ENCODE measurements at regions of chr5 and their contacts with region 1.

Region 1: GRCh38 chr5:134603059-134603458 is 29.6 kb downstream of the SAR1B start:
- DNase-seq: no peak
- H3K4me3 Mint-ChIP-seq: no peak overlapping the region
- H3K27ac Mint-ChIP-seq: peak overlapping the region; percentile 45
- H3K4me1 Mint-ChIP-seq: peaks cover 58% of the 10 kb centered on the region
- H3K27me3 Mint-ChIP-seq: no peaks in the 10 kb centered on the region

Region 2: DNA sequence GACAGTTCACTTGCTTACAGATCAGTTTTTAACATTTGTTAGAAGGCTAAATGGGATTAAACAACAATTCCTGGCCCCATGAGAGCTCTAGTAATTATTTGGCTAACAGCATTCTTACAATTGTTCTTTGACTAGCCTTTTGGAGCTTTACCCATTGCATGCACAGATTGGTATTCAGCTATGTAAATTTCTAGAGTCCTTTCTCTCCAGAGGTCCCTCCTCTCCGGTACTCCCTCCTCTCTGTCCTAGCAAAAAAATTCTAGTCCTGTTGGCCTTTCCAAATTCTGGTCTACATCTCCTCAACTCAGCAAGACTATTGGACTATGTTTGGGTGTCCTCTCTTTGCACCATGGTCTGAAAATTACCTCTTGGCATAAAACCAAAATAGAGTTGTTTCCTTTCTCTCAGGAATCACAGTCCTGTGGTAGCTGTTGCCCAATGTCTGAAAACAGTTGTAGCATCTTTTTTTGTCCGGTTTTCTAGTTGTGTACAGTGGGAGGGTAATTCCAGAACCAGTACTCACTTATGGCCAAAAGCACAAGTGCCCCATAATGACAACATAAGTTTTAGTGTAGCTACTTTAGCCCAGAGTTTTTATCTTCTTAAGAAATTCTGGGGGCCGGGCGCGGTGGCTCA is 11.5 kb after region 1 on chr5:
- CTCF ChIA-PET with region 1: no interaction called
- POLR2A ChIA-PET with region 1: interaction called, 5 read pairs
- intact Hi-C with region 1: loop called (anchors 1 kb)
- DNase-seq: no peak
- H3K4me3 Mint-ChIP-seq: no peak overlapping the region
- H3K27ac Mint-ChIP-seq: peak overlapping the region; percentile 33
- H3K4me1 Mint-ChIP-seq: peaks cover 21% of the 10 kb centered on the region
- H3K27me3 Mint-ChIP-seq: no peaks in the 10 kb centered on the region